Heart left ventricle (tissue), 16 donors: ENCODE measurements at regions of chr4 and their contacts with region 1.

Region 1: DNA sequence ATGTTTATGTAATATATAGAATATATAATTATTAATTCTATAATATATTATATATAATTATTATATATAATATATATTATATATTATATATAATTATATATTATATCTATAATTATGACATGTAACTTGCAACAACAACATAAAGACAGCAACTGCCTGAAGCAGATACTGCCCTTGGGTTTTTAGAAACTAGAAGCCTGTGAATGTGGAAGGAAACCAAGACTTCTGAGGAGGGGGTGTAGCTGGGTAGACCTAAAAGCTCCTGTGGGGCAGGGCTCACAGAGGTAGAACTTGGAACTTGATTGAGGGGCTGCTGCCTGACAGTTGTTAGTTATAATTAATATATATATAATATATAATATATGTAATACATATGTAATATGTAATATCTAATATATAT is 167.2 kb upstream of the SLIT2 start:
- DNase-seq: no peak
- ATAC-seq: no peak
- H3K4me3 ChIP-seq: no peak overlapping the region
- H3K27ac ChIP-seq: no peak overlapping the region
- H3K4me1 ChIP-seq: no peaks in the 10 kb centered on the region
- H3K27me3 ChIP-seq: no peaks in the 10 kb centered on the region
- CTCF ChIP-seq: no peak
- POLR2A ChIP-seq: no peak

Region 2: GRCh38 chr4:19831644-19832285 is 252.7 kb before region 1 on chr4:
- intact Hi-C with region 1: no loop called
- DNase-seq: no peak
- ATAC-seq: no peak
- H3K4me3 ChIP-seq: no peak overlapping the region
- H3K27ac ChIP-seq: no peak overlapping the region
- H3K4me1 ChIP-seq: no peaks in the 10 kb centered on the region
- H3K27me3 ChIP-seq: no peaks in the 10 kb centered on the region
- CTCF ChIP-seq: no peak
- POLR2A ChIP-seq: no peak

Region 3: GRCh38 chr4:19879330-19879729 is 205.2 kb before region 1 on chr4:
- intact Hi-C with region 1: loop called in 1 of 10 experiments (anchors 5 kb)
- DNase-seq: no peak
- ATAC-seq: no peak
- H3K4me3 ChIP-seq: no peak overlapping the region
- H3K27ac ChIP-seq: no peak overlapping the region
- H3K4me1 ChIP-seq: peaks cover 0 to 4% (median 0%) of the 10 kb centered on the region in 12 donors
- H3K27me3 ChIP-seq: no peaks in the 10 kb centered on the region
- CTCF ChIP-seq: no peak
- POLR2A ChIP-seq: no peak

Region 4: DNA sequence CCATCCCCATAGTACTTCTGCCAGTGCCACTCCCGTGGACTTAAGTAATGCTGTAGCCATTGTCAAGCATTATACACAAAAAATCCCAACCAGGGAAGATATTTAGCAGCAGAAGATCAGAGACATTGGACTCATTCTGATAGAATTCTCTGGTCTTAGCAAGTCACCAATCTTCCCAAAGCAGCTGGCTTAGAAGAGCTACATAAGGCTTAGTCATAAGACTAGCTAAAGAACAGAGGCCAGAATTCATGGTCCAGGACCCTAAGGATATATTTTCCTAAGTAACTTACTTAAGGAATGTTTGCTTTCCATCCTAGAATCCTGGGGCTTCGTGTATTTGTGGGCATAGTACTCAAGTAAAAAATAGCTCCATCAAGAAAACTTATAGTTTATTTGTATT is 66.9 kb after region 1 on chr4:
- intact Hi-C with region 1: no loop called
- DNase-seq: no peak
- ATAC-seq: no peak
- H3K4me3 ChIP-seq: no peak overlapping the region
- H3K27ac ChIP-seq: no peak overlapping the region
- H3K4me1 ChIP-seq: no peaks in the 10 kb centered on the region
- H3K27me3 ChIP-seq: no peaks in the 10 kb centered on the region
- CTCF ChIP-seq: no peak
- POLR2A ChIP-seq: no peak